CD4-positive, alpha-beta T cell (primary cell): ENCODE measurements at regions of chr10 and their contacts with region 1.

Region 1: DNA sequence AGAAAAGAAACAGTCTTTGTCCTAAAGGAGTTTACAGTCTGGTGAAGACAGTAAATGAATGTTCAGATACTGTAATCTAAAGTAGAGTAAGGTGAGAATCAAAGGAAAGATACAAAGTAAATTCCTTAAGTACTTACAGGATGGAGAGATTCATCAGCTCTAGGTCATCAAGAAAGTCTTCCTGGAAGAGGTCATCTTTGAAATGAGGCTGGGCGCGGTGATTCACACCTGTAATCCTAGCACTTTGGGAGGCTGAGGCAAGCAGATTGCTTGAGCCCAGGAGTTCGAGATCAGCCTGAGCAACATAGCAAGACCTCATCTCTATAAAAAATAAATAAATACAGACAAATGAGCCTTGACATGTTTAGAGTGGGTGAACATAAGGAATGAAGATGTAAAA is 18.3 kb downstream of the FHIP2A start:
- DNase-seq: no peak
- ATAC-seq: no peak
- H3K4me3 ChIP-seq: no peak overlapping the region
- H3K4me3 Mint-ChIP-seq: no peak overlapping the region
- H3K27ac ChIP-seq: no peak overlapping the region
- H3K27ac Mint-ChIP-seq: no peak overlapping the region
- H3K4me1 ChIP-seq: no peaks in the 10 kb centered on the region
- H3K4me1 Mint-ChIP-seq: no peaks in the 10 kb centered on the region
- H3K27me3 ChIP-seq: no peaks in the 10 kb centered on the region
- H3K27me3 Mint-ChIP-seq: no peaks in the 10 kb centered on the region
- CTCF ChIP-seq: no peak

Region 2: GRCh38 chr10:114767101-114767985 is 72.6 kb before region 1 on chr10:
- CTCF ChIA-PET with region 1: no interaction called
- POLR2A ChIA-PET with region 1: no interaction called
- intact Hi-C with region 1: no loop called
- DNase-seq: peak in 5 of 14 experiments; percentile 5 to 33 (median 26)
- ATAC-seq: no peak
- H3K4me3 ChIP-seq: peak overlapping the region; percentile 39
- H3K4me3 Mint-ChIP-seq: peak overlapping the region; percentile 87
- H3K27ac ChIP-seq: no peak overlapping the region
- H3K27ac Mint-ChIP-seq: no peak overlapping the region
- H3K4me1 ChIP-seq: peaks cover 11% of the 10 kb centered on the region
- H3K4me1 Mint-ChIP-seq: peaks cover 24% of the 10 kb centered on the region
- H3K27me3 ChIP-seq: peaks cover 14 to 37% of the 10 kb centered on the region in 2 experiments
- H3K27me3 Mint-ChIP-seq: peaks cover 51% of the 10 kb centered on the region
- CTCF ChIP-seq: no peak

Region 3: GRCh38 chr10:114810926-114811325 is 29.0 kb before region 1 on chr10:
- CTCF ChIA-PET with region 1: no interaction called
- POLR2A ChIA-PET with region 1: no interaction called
- intact Hi-C with region 1: loop called in 1 of 2 experiments (anchors 1 kb)
- DNase-seq: peak in 1 of 14 experiments; percentile 51
- ATAC-seq: no peak
- H3K4me3 ChIP-seq: no peak overlapping the region
- H3K4me3 Mint-ChIP-seq: no peak overlapping the region
- H3K27ac ChIP-seq: no peak overlapping the region
- H3K27ac Mint-ChIP-seq: peak overlapping the region; percentile 53
- H3K4me1 ChIP-seq: peaks cover 15% of the 10 kb centered on the region
- H3K4me1 Mint-ChIP-seq: peaks cover 32% of the 10 kb centered on the region
- H3K27me3 ChIP-seq: no peaks in the 10 kb centered on the region
- H3K27me3 Mint-ChIP-seq: no peaks in the 10 kb centered on the region
- CTCF ChIP-seq: no peak

Region 4: DNA sequence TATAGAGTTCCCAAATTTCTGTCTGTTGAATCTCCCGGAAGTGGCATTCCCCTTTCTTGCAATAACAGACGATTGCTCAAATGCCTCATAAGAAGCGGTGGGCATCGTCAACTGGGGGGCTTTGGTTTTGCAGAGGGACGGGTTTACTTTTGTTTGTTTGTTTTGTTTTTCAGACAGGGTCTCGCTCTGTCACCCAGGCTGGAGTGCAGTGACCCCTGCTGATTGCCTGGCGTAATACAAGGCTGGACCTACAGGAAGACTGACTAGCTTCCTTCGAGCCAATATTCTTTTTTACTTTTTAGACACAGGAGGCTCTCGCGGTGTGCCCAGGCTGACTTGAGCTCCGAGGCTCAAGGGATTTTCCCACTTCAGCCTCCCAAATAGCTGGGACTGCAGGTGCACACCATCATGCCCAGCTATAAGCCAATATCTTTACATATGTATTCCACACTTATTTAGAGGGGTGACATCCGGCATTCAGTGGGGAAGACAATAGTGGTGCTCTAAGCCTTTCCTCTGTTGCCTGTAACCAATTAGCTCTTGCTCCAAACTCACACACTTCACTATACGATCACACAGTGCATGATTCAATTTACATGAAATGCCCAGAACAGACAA is 39.7 kb after region 1 on chr10:
- CTCF ChIA-PET with region 1: no interaction called
- POLR2A ChIA-PET with region 1: no interaction called
- intact Hi-C with region 1: no loop called
- DNase-seq: peak in 13 of 14 experiments; percentile 3 to 59 (median 20)
- ATAC-seq: peak; percentile 51
- H3K4me3 ChIP-seq: no peak overlapping the region
- H3K4me3 Mint-ChIP-seq: no peak overlapping the region
- H3K27ac ChIP-seq: no peak overlapping the region
- H3K27ac Mint-ChIP-seq: no peak overlapping the region
- H3K4me1 ChIP-seq: peaks cover 5% of the 10 kb centered on the region
- H3K4me1 Mint-ChIP-seq: peaks cover 18% of the 10 kb centered on the region
- H3K27me3 ChIP-seq: peaks cover 0 to 16% of the 10 kb centered on the region in 2 experiments
- H3K27me3 Mint-ChIP-seq: peaks cover 53% of the 10 kb centered on the region
- CTCF ChIP-seq: peak; percentile 57